ENCODE measurements at regions of chr6 and their contacts with region 1.

Region 1: DNA sequence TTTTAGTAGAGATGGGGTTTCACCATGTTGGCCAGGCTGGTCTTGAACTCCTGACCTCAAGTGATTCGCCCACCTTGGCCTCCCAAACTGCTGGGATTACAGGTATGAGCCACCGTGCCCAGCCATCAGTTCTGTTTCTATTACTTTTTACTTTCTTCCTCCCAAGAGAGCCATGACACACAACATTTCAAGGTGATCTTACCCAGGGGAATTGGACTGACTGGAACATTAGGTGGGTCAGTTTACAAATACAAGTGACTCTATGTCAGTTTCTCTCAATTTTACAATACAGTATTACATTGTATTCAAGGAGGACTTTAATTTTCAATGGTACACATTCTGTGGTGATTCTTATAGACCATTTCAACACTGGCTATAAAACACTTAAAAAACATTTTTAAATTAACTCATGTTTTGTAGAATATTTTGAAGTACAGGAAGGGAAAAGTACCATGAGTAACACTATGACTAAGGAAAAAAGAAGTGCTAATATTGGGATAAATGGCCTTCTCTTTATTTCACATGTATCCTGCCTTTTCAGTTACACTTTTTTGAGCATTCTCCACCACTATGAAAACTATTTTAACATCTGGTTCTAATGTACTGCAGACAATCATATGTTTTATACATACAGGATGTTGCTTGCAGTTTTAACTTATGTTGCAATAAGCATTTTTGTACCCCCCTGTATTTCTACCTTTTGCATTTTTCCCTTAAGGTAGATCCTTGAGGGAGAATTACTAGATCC is 8.4 kb downstream of the TPBG start:
- DNase-seq: no peak
- ATAC-seq: no peak
- H3K4me3 ChIP-seq: no peak overlapping the region
- H3K27ac ChIP-seq: no peak overlapping the region
- H3K4me1 ChIP-seq: no peaks in the 10 kb centered on the region
- H3K27me3 ChIP-seq: peaks cover 0 to 1% (median 0%) of the 10 kb centered on the region in 3 donors
- CTCF ChIP-seq: no peak
- POLR2A ChIP-seq: no peak

Region 2: GRCh38 chr6:81105998-81106397 is 1266.0 kb before region 1 on chr6:
- in situ Hi-C with region 1: no loop called
- intact Hi-C with region 1: loop called (anchors 10 kb)
- DNase-seq: no peak
- ATAC-seq: no peak
- H3K4me3 ChIP-seq: no peak overlapping the region
- H3K27ac ChIP-seq: no peak overlapping the region
- H3K4me1 ChIP-seq: no peaks in the 10 kb centered on the region
- H3K27me3 ChIP-seq: no peaks in the 10 kb centered on the region
- CTCF ChIP-seq: no peak
- POLR2A ChIP-seq: no peak

Region 3: DNA sequence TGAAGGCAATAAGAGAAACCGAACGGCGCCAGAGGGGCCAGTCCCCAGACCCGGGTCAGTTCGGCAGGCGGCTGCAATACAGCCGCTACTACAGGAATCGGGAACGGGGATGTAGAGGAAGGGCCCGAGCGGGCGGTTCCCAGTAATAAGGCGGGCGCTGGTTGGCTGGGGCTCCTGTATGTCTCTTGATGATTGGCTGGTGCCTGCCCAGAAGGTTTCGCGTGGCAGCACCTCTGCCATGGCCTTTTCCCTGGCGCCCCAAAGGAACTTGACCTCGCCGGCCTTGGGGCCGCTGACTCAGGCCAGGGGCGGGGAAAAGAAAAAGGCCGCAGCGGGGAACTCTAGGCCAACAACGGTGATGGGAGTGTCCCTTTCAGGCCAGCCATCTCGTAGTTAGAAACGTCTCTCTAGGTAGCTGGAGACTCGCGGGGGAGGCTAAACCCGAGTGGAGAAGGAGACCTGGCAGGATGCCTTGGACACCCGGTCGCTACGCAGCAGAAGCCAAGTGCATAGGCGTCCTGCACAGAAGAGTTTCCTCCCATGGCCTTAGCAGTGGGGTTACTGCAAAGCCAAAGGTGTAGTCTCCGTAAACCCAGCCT is 124.2 kb before region 1 on chr6 and contains the start of gene IBTK:
- in situ Hi-C with region 1: no loop called
- intact Hi-C with region 1: no loop called
- DNase-seq: peak; percentile 94 to 97
- ATAC-seq: peak; percentile 92 to 95
- H3K4me3 ChIP-seq: peak within 1 kb of the TSS; percentile 79 to 98 (median 86)
- H3K27ac ChIP-seq: peak within 1 kb of the TSS; percentile 89 to 98 (median 92)
- H3K4me1 ChIP-seq: peaks cover 31 to 44% of the 10 kb centered on the region in 2 donors
- H3K27me3 ChIP-seq: no peaks in the 10 kb centered on the region
- CTCF ChIP-seq: no peak
- POLR2A ChIP-seq: peak; percentile 71 to 76
- total RNA-seq, gene IBTK: 26.2 to 31.7 (median 29.5) TPM

Measured in gastrocnemius medialis (tissue), 4 donors.